Dendritic cell treated with granulocyte-macrophage colony-stimulating factor and Interleukin-4, amounts not matched to agents 40 ng/mL and 50 ng/mL, for 4 days (primary cell): ENCODE measurements at regions of chr12 and their contacts with region 1.

Region 1: GRCh38 chr12:14629832-14630710 is 62.4 kb upstream of the PLBD1 start:
- H3K4me3 Mint-ChIP-seq: no peak overlapping the region
- H3K27ac Mint-ChIP-seq: no peak overlapping the region
- H3K4me1 Mint-ChIP-seq: no peaks in the 10 kb centered on the region
- H3K27me3 Mint-ChIP-seq: no peaks in the 10 kb centered on the region

Region 2: DNA sequence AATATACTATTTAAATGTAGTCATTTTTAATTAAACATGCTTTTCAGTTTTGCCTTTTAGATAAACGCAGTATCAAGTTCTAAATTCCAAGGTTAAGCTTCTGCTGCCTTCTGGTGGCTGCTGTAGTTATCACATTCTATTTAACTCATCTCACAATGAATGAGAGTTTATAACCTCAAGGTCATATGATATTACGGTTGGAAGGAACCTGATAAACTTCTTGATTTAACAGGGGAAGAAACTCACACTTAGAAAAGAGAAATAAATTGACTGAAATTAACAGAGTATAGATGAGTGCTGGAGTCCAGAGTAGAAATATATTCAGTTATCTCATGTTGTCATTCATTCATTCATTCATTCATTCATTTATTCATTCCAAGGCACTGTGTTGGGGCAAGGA is 34.4 kb after region 1 on chr12:
- intact Hi-C with region 1: loop called (anchors 1 kb)
- H3K4me3 Mint-ChIP-seq: no peak overlapping the region
- H3K27ac Mint-ChIP-seq: no peak overlapping the region
- H3K4me1 Mint-ChIP-seq: no peaks in the 10 kb centered on the region
- H3K27me3 Mint-ChIP-seq: peaks cover 4% of the 10 kb centered on the region

Region 3: DNA sequence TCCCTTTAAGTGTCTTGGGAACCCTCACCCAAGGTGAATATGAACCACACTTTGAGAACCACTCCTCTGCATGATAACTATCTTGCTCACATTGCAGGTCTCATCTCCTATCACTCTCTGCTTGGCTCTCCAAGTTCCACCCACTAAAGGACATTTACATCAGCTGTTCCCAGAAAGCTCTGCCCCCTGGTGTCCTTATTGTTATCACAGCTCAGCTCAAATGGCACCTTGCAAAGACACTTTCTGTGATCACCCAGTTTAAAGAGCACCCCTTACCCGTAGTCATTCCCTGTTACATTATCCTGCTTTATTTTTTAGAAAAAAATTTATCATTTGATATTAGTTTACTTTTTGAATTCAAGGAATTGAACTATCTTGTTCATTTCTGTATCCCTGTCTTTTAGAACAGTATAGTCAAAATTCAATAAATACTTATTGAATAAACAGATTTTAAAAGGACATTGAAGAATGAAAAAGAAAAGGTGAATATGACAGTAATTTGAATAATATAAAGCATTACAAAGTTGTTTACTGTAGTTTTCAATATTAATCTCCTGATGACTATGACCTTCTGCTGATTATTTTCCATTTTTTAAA is 86.9 kb after region 1 on chr12:
- intact Hi-C with region 1: loop called (anchors 1 kb)
- H3K4me3 Mint-ChIP-seq: no peak overlapping the region
- H3K27ac Mint-ChIP-seq: no peak overlapping the region
- H3K4me1 Mint-ChIP-seq: no peaks in the 10 kb centered on the region
- H3K27me3 Mint-ChIP-seq: peaks cover 8% of the 10 kb centered on the region